GM12878 (cell line): ENCODE measurements at regions of chr3 and their contacts with region 1.

Region 1: DNA sequence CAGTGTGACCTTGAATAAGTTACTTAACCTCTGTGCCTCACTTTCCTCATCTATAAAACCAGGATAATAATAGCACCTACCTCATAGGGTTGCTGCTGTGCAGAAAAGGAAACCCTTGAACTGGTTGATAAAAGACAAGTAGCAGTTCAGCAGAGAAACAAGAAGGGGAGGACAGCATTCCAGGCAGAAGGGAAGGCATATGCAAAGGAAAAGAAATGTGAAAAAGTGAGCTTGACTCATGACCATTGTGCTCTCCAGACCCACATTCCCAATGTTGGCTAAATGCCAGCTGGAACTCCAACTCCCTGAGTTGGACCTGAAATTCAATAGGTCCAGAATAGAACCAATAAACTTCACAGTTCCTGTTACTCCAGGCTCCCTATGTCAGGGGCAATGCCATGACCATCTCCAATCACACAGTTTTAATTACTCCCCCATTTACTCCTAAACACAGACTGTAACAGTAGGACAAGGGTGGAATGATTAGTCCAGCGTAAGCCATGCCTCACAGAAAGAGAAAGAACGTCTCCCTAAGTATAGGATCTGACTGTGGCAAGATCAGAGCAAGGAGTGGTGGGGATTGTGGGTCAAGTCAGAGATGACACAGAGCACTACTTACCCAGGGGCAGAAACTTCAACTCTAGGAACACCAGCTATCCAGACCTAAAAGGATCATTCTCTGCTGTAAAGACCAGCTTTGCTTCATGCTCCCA is 26.9 kb downstream of the PRKAR2A start:
- DNase-seq: no peak
- ATAC-seq: no peak
- H3K4me3 ChIP-seq: no peak overlapping the region
- H3K27ac ChIP-seq: no peak overlapping the region
- H3K4me1 ChIP-seq: no peaks in the 10 kb centered on the region
- H3K27me3 ChIP-seq: no peaks in the 10 kb centered on the region
- CTCF ChIP-seq: no peak
- EP300 ChIP-seq: no peak
- POLR2A ChIP-seq: no peak
- RAD21 ChIP-seq: no peak

Region 2: DNA sequence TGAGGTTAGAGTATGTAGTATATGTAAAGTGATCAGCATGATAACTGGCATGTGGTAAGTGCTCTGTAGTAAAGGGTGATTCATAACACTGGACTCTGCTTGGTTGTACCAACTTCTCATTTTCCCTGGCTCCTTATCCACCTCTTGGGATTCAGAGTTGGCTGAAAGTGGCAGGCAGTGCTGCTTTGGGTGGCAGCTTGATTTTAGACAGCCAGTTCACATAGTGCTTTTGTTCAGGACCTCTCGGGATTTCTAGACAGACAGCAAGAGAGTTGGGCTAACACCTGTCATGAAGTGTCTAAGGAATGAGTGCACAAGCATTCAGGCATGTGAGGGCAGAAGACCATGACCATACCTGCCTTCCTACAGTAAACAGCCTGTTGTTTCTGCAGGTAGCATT is 1188.2 kb after region 1 on chr3:
- CTCF ChIA-PET with region 1: no interaction called
- POLR2A ChIA-PET with region 1: interaction called, 14 read pairs
- RAD21 ChIA-PET with region 1: no interaction called
- SMC1A ChIA-PET with region 1: no interaction called
- in situ Hi-C with region 1: no loop called
- intact Hi-C with region 1: no loop called
- DNase-seq: no peak
- ATAC-seq: no peak
- H3K4me3 ChIP-seq: no peak overlapping the region
- H3K27ac ChIP-seq: no peak overlapping the region
- H3K4me1 ChIP-seq: no peaks in the 10 kb centered on the region
- H3K27me3 ChIP-seq: no peaks in the 10 kb centered on the region
- CTCF ChIP-seq: no peak
- EP300 ChIP-seq: no peak
- POLR2A ChIP-seq: no peak
- RAD21 ChIP-seq: no peak